ENCODE measurements at regions of chr17 and their contacts with region 1.

Region 1: GRCh38 chr17:43816336-43817320 is 16.3 kb downstream of the MPP3 start:
- DNase-seq: no peak
- H3K4me3 ChIP-seq: no peak overlapping the region
- H3K27ac ChIP-seq: no peak overlapping the region
- H3K4me1 ChIP-seq: no peaks in the 10 kb centered on the region
- H3K27me3 ChIP-seq: no peaks in the 10 kb centered on the region
- CTCF ChIP-seq: no peak

Region 2: DNA sequence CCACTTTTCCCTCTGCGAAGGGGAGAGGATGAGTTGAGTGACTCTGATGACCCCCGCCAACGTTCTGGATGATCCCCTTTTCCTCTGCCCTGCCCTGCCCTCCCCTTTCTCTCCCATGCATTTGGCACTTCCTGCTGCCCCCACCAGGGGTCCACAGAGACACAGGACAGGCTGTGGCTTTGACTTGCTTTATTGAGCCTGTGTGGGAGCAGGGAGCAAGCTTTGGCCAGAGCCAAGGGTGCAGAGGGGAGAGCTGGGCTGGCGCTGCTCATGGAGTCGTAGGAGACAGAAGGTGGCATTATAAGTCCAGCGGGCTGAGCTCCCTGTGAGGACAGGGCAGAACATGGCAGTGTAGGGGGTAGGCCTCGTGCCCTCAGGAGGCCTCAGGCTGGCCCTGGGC is 124.0 kb after region 1 on chr17:
- CTCF ChIA-PET with region 1: no interaction called
- POLR2A ChIA-PET with region 1: no interaction called
- intact Hi-C with region 1: no loop called
- DNase-seq: peak; percentile 37
- H3K4me3 ChIP-seq: no peak overlapping the region
- H3K27ac ChIP-seq: no peak overlapping the region
- H3K4me1 ChIP-seq: no peaks in the 10 kb centered on the region
- H3K27me3 ChIP-seq: no peaks in the 10 kb centered on the region
- CTCF ChIP-seq: peak; percentile 46

Region 3: DNA sequence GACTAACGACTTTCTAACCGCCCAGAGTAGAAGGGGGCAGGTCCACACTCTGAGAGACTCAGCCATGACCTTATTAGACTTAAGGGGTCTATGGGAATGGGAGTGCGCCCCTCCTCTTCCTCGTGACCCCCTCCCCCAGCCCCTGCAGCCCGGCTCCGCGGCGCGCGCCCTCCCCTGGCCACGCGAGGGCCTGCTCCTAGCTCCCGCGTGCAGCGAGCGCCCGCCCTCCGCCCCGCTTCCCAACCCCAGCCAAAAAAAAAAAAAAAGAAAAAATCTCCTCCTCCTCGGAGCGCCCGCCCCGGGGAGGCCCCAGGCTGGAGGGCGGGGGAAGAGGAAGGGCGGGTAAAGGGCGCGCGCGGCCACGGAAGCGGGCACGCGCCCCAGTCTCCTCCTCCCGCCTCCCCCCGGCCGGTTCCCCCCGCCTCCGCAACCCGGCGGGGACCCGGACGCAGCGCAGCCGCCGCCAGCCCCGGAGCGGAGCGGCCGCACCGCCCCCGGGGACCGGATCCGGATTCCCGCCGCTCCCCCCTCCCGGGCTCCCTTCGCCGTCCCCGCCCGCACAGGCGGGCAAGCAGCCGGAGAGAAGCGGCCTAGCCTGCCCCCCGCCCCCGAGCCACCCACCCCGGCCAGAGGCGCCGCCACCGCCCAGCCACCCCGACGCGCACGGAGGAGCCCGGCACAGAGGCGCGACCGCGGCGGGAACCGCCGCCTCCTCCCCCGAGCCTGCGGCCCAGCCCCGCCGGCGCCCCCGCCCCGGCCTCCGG is 401.9 kb after region 1 on chr17:
- CTCF ChIA-PET with region 1: no interaction called
- POLR2A ChIA-PET with region 1: no interaction called
- intact Hi-C with region 1: no loop called
- DNase-seq: peak; percentile 88
- H3K4me3 ChIP-seq: peak overlapping the region; percentile 72
- H3K27ac ChIP-seq: peak overlapping the region; percentile 93
- H3K4me1 ChIP-seq: peaks cover 9% of the 10 kb centered on the region
- H3K27me3 ChIP-seq: no peaks in the 10 kb centered on the region
- CTCF ChIP-seq: peak; percentile 50

Region 4: GRCh38 chr17:44247440-44247841 is 430.8 kb after region 1 on chr17:
- CTCF ChIA-PET with region 1: interaction called, 11 read pairs
- POLR2A ChIA-PET with region 1: no interaction called
- intact Hi-C with region 1: no loop called
- DNase-seq: no peak
- H3K4me3 ChIP-seq: no peak overlapping the region
- H3K27ac ChIP-seq: no peak overlapping the region
- H3K4me1 ChIP-seq: no peaks in the 10 kb centered on the region
- H3K27me3 ChIP-seq: no peaks in the 10 kb centered on the region
- CTCF ChIP-seq: no peak